Lower leg skin (tissue), 4 donors: ENCODE measurements at regions of chr7 and their contacts with region 1.

Region 1: DNA sequence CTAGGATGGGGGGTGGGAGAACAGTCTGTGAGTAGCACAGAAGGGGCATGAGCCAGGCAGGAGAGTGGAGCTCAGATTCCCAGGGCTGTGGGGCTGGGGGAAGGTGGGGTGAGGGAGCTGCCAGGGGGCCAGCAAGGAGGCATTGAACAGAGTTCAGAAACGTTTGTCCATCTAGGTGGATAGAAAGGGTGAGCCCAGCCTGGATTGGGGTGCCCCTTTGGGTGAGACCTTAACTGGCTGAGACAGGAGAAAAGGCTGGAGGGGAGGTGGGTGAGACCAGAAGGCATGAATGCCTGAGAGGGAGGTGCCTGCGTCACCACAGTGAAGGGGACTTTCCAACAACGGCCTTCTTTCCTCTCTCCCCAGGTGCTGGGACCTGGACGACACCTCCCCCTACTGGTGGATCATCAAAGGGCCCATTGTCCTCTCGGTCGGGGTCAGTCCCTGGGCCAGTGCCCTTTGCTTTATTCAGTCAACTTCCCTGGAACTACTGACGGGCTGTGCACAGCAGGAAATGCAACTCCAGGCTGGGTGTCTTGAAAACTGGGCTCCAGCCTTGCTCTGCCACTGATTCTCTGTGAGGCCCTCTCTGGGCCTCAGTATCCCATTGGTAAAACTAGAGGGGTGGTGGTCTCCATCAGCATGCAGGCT is 11.0 kb downstream of the GHRHR start:
- DNase-seq: peak in 1 of 2 donors; percentile 82
- H3K4me3 ChIP-seq: no peak overlapping the region
- CTCF ChIP-seq: no peak
- POLR2A ChIP-seq: no peak

Region 2: DNA sequence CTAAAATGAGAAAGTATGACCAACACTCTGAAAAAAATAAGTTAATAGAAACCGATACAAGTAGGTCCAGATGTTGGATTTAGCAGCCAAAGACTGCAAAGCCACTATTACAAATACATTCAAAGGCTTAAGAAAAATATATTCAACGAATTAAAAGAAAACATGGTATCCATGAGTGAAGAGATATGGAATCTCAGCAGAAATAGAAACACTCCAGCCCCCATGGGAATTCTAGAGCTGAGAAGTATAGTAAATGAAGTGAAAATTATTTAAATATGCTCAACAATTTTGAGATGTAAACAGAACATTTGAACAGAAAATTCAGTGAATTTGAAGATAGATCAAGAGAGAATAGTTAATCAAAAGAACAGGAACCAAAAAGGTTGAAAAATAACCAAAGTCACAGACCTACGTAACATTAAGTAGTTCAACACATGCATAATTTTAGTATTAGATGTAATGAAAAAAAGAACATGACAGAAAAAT is 1240.4 kb before region 1 on chr7:
- intact Hi-C with region 1: no loop called
- DNase-seq: no peak
- H3K4me3 ChIP-seq: no peak overlapping the region
- CTCF ChIP-seq: no peak
- POLR2A ChIP-seq: no peak

Region 3: GRCh38 chr7:30799206-30799975 is 175.3 kb before region 1 on chr7:
- intact Hi-C with region 1: loop called (anchors 5 kb)
- DNase-seq: peak in 1 of 2 donors; percentile 69
- H3K4me3 ChIP-seq: no peak overlapping the region
- CTCF ChIP-seq: no peak
- POLR2A ChIP-seq: no peak

Region 4: GRCh38 chr7:31033674-31034300 is 59.1 kb after region 1 on chr7:
- intact Hi-C with region 1: no loop called
- DNase-seq: no peak
- H3K4me3 ChIP-seq: no peak overlapping the region
- CTCF ChIP-seq: no peak
- POLR2A ChIP-seq: no peak

Region 5: GRCh38 chr7:31443457-31443856 is 468.7 kb after region 1 on chr7:
- intact Hi-C with region 1: no loop called
- DNase-seq: no peak
- H3K4me3 ChIP-seq: no peak overlapping the region
- CTCF ChIP-seq: no peak
- POLR2A ChIP-seq: no peak